ENCODE measurements at regions of chr11 and their contacts with region 1.

Region 1: GRCh38 chr11:67265633-67266423 is 445 bp upstream of the GRK2 start:
- DNase-seq: peak; percentile 45
- H3K4me3 ChIP-seq: no peak overlapping the region
- H3K27ac ChIP-seq: no peak overlapping the region
- H3K4me1 ChIP-seq: peaks cover 37% of the 10 kb centered on the region
- H3K27me3 ChIP-seq: no peaks in the 10 kb centered on the region
- CTCF ChIP-seq: peak; percentile 62 to 79
- POLR2A ChIP-seq: no peak

Region 2: GRCh38 chr11:67213178-67213621 is 52.6 kb before region 1 on chr11:
- CTCF ChIA-PET with region 1: no interaction called
- POLR2A ChIA-PET with region 1: no interaction called
- dilution Hi-C with region 1: no loop called
- intact Hi-C with region 1: no loop called
- DNase-seq: no peak
- H3K4me3 ChIP-seq: no peak overlapping the region
- H3K27ac ChIP-seq: no peak overlapping the region
- H3K4me1 ChIP-seq: no peaks in the 10 kb centered on the region
- H3K27me3 ChIP-seq: no peaks in the 10 kb centered on the region
- CTCF ChIP-seq: no peak
- POLR2A ChIP-seq: no peak

Region 3: DNA sequence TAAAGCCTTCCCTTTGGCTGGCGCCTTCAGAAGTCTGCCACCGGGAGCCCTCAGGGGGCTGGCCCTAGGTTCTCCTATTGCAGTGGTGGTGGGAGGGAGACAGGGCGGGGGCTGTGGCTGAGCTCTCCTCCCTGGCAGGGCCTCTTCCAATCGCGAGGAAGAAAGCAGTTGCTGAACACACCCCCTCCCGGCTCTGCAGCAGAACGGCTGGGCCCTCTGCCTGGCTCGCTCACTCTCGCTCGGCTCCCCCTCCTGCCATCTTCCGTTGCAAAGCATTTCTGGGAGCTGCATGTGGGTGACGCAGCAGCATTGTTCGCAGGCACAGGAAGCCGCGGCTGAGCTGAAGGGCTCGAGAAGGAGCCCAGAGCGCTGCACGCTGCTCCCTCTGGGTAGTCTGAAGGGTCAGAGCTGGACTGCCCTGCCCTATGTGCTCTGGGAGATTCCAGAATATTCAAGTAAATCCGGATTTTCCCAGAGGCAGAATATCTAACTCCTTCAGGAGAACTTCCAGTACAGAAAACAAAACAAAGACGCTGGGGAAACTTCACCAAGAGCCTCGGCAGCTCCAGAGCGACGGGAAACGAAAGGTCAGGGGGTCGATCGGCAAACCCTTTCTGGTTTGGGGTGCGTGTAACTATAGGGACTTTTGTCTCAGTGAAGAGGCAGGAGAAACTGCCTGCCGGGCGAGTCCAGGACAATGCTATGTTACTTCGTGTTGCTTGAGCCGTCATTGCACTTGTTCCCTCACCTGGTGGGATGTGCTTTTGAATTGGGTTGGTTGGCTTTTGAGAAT is 25.8 kb before region 1 on chr11:
- CTCF ChIA-PET with region 1: interaction called, 10 read pairs
- POLR2A ChIA-PET with region 1: interaction called, 6 read pairs
- dilution Hi-C with region 1: no loop called
- intact Hi-C with region 1: loop called (anchors 1 kb)
- DNase-seq: peak; percentile 100
- H3K4me3 ChIP-seq: peak overlapping the region; percentile 78 to 90 (median 81)
- H3K27ac ChIP-seq: peak overlapping the region; percentile 83
- H3K4me1 ChIP-seq: peaks cover 23% of the 10 kb centered on the region
- H3K27me3 ChIP-seq: no peaks in the 10 kb centered on the region
- CTCF ChIP-seq: peak in 1 of 2 donors; percentile 9
- POLR2A ChIP-seq: peak; percentile 99

Region 4: DNA sequence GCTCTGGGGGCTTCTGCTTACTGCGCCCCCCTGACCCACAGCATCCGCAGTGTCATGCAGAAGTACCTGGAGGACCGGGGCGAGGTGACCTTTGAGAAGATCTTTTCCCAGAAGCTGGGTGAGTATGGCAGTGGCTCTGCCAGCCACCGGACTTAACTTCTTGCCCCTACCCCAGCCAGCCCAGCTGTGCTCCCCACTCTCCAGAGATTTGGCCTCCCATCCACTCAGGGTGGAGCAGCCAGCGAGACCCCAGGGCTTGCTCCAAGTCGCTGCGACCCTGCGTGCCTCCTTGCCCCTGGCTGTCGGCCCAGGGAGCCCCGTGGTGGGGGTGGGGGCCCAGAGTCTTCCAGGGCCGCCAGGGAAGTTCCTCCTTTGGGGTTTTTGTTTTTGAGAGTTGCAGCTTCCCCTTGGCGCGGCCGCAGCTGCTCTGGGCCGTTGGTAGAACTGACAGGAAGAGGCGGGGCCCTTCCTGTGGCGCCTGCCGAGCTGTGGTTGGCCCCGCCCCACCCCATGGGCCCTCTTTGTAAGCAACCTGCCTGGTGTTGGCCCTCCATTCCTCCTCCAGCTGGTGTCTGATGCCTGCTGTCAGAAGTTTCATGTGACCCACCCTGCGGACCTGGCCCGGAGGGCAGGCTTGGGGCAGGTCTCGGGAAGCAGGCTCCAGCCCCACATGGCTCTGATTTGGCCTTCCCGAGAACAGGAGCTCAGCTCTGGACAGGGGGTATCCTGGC is 11.6 kb after region 1 on chr11:
- CTCF ChIA-PET with region 1: interaction called, 16 read pairs
- POLR2A ChIA-PET with region 1: no interaction called
- dilution Hi-C with region 1: no loop called
- intact Hi-C with region 1: loop called (anchors 1 kb)
- DNase-seq: peak; percentile 88
- H3K4me3 ChIP-seq: no peak overlapping the region
- H3K27ac ChIP-seq: peak overlapping the region; percentile 76
- H3K4me1 ChIP-seq: peaks cover 17% of the 10 kb centered on the region
- H3K27me3 ChIP-seq: no peaks in the 10 kb centered on the region
- CTCF ChIP-seq: no peak
- POLR2A ChIP-seq: no peak

Region 5: DNA sequence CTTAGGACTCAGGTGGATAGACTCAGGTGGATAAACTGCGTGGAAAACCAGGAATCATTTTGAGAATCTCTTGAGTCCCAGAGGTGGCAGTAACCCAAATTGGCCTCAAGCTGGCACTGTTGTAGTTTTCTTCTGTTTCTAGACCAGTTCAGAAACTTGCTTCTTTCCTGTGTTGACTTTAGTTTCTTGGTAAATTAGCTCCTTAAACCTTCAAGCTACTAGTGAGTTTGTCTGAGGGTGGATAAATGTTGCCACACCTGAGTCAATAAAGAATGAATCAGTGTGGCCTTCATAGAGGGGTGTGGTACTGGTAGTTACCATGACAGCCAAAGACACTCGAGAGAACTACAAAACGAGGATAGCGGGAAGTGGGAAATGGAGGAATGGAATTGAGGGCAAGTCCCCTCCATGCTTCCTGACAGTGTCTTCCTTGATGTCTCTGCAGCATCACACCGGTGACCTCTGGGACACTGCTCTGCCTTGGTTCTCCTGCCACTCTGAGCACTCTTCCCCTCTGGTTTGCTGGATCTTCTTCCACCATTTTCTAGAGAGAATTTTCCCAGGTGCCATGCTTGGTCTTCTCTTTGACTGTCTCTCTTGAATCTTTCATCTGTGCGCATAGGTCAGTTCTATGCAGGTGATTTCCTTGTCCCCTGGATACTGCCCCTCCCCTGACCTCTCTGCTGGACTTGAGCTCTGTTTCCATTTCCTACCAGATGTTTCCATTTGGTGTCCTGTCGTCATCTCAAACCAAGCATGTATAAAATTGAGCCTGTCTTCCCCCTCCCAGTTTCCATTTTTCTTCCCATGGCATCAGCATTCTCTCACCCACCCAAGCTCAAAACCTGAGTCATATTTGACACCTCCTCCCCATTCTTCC is 80.3 kb after region 1 on chr11:
- CTCF ChIA-PET with region 1: interaction called, 20 read pairs
- POLR2A ChIA-PET with region 1: no interaction called
- dilution Hi-C with region 1: no loop called
- intact Hi-C with region 1: no loop called
- DNase-seq: peak; percentile 49
- H3K4me3 ChIP-seq: no peak overlapping the region
- H3K27ac ChIP-seq: no peak overlapping the region
- H3K4me1 ChIP-seq: peaks cover 7% of the 10 kb centered on the region
- H3K27me3 ChIP-seq: no peaks in the 10 kb centered on the region
- CTCF ChIP-seq: peak; percentile 70 to 81
- POLR2A ChIP-seq: no peak

Region 6: GRCh38 chr11:67382276-67383136 is 116.7 kb after region 1 on chr11:
- CTCF ChIA-PET with region 1: interaction called, 72 read pairs
- POLR2A ChIA-PET with region 1: no interaction called
- dilution Hi-C with region 1: no loop called
- intact Hi-C with region 1: loop called (anchors 1 kb)
- DNase-seq: peak; percentile 72
- H3K4me3 ChIP-seq: no peak overlapping the region
- H3K27ac ChIP-seq: no peak overlapping the region
- H3K4me1 ChIP-seq: no peaks in the 10 kb centered on the region
- H3K27me3 ChIP-seq: no peaks in the 10 kb centered on the region
- CTCF ChIP-seq: peak; percentile 97
- POLR2A ChIP-seq: no peak

Region 7: GRCh38 chr11:68003846-68004550 is 738.2 kb after region 1 on chr11 and contains the start of gene UNC93B1:
- CTCF ChIA-PET with region 1: no interaction called
- POLR2A ChIA-PET with region 1: no interaction called
- dilution Hi-C with region 1: no loop called
- intact Hi-C with region 1: no loop called
- DNase-seq: peak; percentile 70
- H3K4me3 ChIP-seq: peak within 1 kb of the TSS; percentile 17 to 51 (median 50)
- H3K27ac ChIP-seq: no peak within 1 kb of the TSS
- H3K4me1 ChIP-seq: peaks cover 3% of the 10 kb centered on the region
- H3K27me3 ChIP-seq: no peaks in the 10 kb centered on the region
- CTCF ChIP-seq: no peak
- POLR2A ChIP-seq: peak; percentile 53
- total RNA-seq, gene UNC93B1: 10.6 and 11.5 TPM in 2 replicates

Measured in endothelial cell of umbilical vein (primary cell).